ENCODE measurements at regions of chr17 and their contacts with region 1.

Region 1: GRCh38 chr17:67221062-67221998 is 23.7 kb downstream of the HELZ start:
- DNase-seq: peak; percentile 52
- H3K4me3 Mint-ChIP-seq: no peak overlapping the region
- H3K27ac Mint-ChIP-seq: no peak overlapping the region
- H3K4me1 Mint-ChIP-seq: peaks cover 23% of the 10 kb centered on the region
- H3K27me3 Mint-ChIP-seq: no peaks in the 10 kb centered on the region

Region 2: DNA sequence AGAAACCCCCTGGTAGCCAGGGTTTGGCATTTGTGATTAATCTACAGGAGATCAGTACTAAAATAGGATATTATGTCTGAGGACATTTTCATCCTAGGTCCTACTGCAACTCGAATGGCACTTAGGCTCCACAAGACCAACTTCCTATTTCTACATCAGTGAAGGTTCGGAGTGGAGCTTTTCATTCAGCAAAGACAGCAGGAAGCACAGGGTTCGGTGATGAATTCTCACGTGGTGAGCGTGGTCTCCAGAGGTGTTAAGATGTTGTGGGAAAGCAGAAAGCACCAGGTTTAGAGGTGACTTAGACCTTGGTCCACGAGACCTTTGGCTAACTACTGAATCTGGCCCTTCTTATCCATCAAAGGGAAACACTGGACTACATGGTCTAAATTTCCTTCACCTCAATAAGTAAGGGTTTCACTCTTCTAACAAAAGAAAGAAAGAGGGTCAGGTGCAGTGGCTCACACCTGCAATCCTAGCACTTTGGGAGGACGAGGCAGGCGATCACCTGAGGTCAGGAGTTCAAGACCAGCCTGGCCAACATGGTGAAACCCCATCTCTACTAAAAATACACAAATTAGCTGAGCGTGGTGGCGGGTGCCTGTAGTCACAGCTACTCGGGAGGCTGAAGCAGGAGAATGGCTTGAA is 37.6 kb after region 1 on chr17:
- CTCF ChIA-PET with region 1: no interaction called
- intact Hi-C with region 1: loop called (anchors 5 kb)
- DNase-seq: peak; percentile 41
- H3K4me3 Mint-ChIP-seq: no peak overlapping the region
- H3K27ac Mint-ChIP-seq: no peak overlapping the region
- H3K4me1 Mint-ChIP-seq: peaks cover 23% of the 10 kb centered on the region
- H3K27me3 Mint-ChIP-seq: no peaks in the 10 kb centered on the region

Region 3: GRCh38 chr17:67293251-67294203 is 72.2 kb after region 1 on chr17:
- CTCF ChIA-PET with region 1: interaction called, 49 read pairs
- intact Hi-C with region 1: loop called (anchors 1 kb)
- DNase-seq: peak; percentile 82
- H3K4me3 Mint-ChIP-seq: no peak overlapping the region
- H3K27ac Mint-ChIP-seq: no peak overlapping the region
- H3K4me1 Mint-ChIP-seq: no peaks in the 10 kb centered on the region
- H3K27me3 Mint-ChIP-seq: no peaks in the 10 kb centered on the region